GM10248 (cell line): ENCODE measurements at regions of chr9 and their contacts with region 1.

Region 1: GRCh38 chr9:122099271-122099869 is 6.3 kb upstream of the TTLL11 start:
- DNase-seq: peak; percentile 80
- CTCF ChIP-seq: peak; percentile 89

Region 2: DNA sequence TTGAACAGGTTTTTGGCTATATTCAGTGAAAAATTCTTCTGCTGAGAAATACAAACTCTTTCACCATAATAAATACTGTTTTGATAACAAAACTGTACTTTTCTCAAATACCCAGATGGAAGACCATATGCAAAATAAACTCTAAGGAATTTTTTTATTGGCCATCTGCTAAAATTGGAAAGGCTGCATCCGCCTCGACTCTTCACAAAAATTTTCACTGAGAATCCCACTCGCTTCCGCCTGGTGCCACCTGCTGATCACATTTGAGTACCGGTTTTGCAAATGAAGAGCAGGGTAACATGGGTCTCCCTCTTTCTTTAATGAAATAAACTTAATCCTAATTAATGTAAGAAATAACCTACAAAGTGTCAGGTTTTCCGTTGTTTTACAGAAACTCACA is 82.6 kb before region 1 on chr9:
- CTCF ChIA-PET with region 1: no interaction called
- POLR2A ChIA-PET with region 1: no interaction called
- DNase-seq: no peak
- CTCF ChIP-seq: no peak

Region 3: DNA sequence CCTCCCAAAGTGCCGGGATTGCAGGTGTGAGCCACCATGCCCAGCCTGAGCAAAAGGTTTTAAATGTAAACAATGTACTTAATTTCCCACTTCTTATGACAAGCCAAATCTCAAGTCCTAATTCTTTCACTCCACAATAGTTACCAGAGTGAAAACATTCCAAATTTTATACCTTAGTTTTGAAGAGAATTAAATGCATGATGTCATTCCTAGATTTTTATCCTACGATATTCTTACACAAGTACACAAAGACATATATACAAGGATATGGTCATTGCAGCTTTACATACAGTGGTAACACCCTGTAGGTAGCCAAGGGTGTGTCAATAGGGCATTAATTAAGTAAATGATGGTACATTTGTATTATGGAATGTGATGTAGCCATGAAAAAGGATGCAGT is 31.6 kb before region 1 on chr9:
- CTCF ChIA-PET with region 1: no interaction called
- POLR2A ChIA-PET with region 1: no interaction called
- DNase-seq: no peak
- CTCF ChIP-seq: no peak

Region 4: DNA sequence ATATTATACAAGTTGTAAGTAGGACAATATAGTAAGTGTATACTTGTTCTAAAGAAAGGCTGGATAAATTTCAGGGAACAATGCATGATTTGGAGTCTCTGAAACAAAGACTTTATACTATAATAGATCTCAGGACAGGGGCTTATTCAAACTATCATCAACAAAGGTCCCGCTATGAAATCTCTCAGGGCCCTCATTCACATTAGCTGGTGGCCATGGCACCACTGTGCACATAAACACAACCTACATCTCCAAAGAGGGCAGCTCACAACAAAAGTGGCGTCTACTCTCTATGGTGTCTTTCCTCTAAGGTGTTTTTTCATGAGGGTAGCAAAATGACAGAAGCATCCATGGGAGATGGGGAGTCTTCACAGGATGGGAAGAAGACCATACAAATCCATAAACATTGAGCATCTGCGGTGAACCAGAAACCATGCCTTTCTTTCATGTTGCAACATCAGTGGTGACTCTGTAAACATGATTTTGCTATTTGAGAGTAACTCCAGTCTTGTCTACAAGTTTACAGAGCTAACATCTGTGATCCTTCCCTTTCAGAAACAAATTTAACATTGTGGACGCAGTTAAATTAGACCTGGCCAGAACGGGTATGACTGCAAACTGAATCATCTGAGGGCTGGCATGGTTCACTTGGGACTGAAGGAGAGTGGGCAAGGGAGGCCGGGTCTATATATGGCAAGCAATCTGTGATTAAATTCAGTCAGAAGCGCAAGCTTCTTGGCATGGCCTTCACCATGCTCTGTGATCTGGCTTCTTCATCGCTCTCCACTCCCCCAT is 11.8 kb before region 1 on chr9:
- CTCF ChIA-PET with region 1: interaction called, 38 read pairs
- POLR2A ChIA-PET with region 1: no interaction called
- DNase-seq: no peak
- CTCF ChIP-seq: no peak

Region 5: DNA sequence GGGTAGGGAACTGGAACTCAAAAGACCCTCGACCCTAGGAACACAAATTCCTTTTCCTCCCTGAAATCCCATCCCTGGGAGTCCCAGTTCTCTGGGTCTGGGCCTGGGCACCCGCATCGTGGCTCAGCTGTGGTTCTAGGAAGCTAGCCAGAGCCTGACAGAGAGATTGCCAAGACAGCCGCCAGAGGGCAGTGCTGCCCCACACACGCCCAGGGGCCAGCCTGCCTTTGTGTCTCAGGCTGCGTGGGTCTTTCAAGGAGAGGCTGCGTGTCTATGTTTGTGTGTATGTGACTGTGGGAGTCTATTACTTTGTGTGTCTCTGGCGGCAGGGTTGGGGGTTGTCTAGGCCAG is 25.8 kb after region 1 on chr9:
- CTCF ChIA-PET with region 1: interaction called, 150 read pairs
- POLR2A ChIA-PET with region 1: no interaction called
- DNase-seq: peak; percentile 86
- CTCF ChIP-seq: peak; percentile 92

Region 6: GRCh38 chr9:122159026-122159924 is 59.9 kb after region 1 on chr9 and contains the starts of genes MORN5 and NDUFA8:
- CTCF ChIA-PET with region 1: interaction called, 10 read pairs
- POLR2A ChIA-PET with region 1: no interaction called
- DNase-seq: peak; percentile 99
- CTCF ChIP-seq: no peak

Region 7: DNA sequence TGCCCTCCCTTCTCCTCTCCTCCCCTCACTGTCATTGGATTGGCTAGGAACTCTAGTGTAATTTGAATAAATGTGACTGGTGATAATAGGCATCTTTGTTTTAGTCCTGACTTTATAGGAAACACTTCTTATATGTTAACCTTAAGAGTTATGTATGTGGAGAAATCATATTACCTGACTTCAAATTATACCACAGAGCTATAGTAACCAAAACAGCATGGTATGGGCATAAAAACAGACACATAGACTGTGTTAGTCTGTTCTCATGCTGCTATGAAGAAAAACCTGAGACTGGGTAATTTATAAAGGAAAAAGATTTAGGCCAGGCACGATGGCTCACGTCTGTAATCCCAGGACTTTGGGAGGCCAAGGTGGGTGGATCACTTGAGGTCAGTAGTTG is 174.7 kb after region 1 on chr9:
- CTCF ChIA-PET with region 1: no interaction called
- POLR2A ChIA-PET with region 1: no interaction called
- DNase-seq: no peak
- CTCF ChIP-seq: no peak

Region 8: GRCh38 chr9:122356627-122357026 is 257.3 kb after region 1 on chr9:
- CTCF ChIA-PET with region 1: interaction called, 100 read pairs
- POLR2A ChIA-PET with region 1: no interaction called
- DNase-seq: no peak
- CTCF ChIP-seq: peak; percentile 4